Right cardiac atrium (tissue), 5 donors: ENCODE measurements at regions of chr13 and their contacts with region 1.

Region 1: DNA sequence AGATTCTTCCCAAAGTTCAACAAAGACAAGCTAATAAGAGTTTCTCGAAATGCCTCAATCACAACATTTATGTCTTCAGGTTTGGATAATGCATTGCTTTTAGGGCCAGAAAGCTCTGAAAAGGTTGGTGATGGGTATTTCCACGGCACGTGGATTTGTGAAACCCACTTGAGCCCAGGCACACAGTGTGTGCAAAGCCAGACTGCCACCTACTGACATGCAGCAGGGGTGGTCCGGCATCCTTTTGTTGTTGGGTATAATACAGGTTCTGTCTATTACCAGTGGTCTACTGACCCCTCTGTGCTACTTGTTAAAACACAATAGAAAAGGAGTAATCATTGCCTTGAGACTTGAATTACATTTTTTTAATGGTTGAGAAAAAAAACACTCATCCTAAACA is 225.6 kb downstream of the RAP2A start:
- DNase-seq: peak in 1 of 3 donors; percentile 65
- ATAC-seq: peak; percentile 59 to 60
- H3K4me3 ChIP-seq: no peak overlapping the region
- H3K27ac ChIP-seq: no peak overlapping the region
- H3K4me1 ChIP-seq: no peaks in the 10 kb centered on the region
- H3K27me3 ChIP-seq: no peaks in the 10 kb centered on the region

Region 2: GRCh38 chr13:97359181-97360057 is 300.2 kb before region 1 on chr13:
- intact Hi-C with region 1: loop called in 1 of 4 experiments (anchors 10 kb)
- DNase-seq: no peak
- ATAC-seq: peak; percentile 87 to 89
- H3K4me3 ChIP-seq: no peak overlapping the region
- H3K27ac ChIP-seq: no peak overlapping the region
- H3K4me1 ChIP-seq: peaks cover 9% of the 10 kb centered on the region
- H3K27me3 ChIP-seq: no peaks in the 10 kb centered on the region

Region 3: DNA sequence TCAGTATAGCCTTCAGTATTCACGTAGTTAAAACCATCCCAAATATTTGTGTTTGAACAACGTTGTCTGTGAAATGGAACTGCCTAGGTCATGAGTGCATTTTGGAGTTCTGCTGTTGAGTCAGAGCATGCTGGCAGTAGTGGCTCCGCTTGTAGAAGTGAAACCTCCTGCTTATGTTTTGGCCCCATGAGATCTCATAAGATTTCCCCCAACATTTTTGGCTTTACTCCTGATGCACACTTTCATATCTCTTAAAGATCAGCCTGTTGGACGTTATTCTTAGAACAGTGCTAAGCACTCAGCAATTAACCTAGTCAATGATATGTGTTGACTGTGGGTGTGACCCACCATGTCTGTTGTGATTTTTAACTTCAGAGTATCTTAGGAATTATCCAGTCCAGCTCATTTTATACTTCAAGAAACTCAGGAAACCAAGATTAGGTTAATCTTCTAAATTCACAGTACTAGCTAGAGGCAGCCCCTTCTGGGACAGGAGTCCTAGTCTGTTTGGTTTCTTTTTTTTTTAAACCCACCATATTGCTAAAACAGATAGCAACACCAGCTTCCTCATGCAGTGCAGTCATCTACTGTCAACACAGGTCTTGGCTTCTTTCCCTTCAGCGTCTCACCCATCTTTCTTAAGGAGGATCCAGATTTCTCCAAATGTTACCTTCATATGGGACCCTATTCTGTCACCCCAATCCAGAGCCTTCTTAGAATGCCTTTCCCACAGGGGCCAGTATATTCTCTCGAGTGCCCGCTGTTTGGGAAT is 199.4 kb before region 1 on chr13:
- intact Hi-C with region 1: no loop called
- DNase-seq: peak in 1 of 3 donors; percentile 40
- ATAC-seq: peak; percentile 59 to 67
- H3K4me3 ChIP-seq: no peak overlapping the region
- H3K27ac ChIP-seq: no peak overlapping the region
- H3K4me1 ChIP-seq: peaks cover 10% of the 10 kb centered on the region
- H3K27me3 ChIP-seq: no peaks in the 10 kb centered on the region

Region 4: DNA sequence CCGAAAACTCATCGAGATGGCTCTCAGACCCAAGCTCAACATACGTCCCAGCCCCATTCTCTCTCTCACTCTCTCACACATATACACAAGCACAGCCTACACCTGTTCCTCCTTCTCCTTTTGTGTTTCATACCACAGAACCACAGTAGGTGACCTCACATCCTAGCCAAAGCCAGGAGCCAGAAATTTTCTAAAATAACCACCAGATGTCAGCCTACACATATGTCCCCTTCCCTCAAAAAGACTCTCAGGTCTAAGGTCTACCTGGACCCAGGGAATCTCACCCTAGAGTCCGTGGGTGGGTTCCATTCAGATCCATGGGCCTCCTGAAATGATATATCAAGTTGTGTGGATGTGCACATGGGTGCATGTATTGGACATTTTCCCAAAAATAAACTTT is 189.7 kb after region 1 on chr13:
- intact Hi-C with region 1: no loop called
- DNase-seq: no peak
- ATAC-seq: peak in 1 of 2 donors; percentile 21
- H3K4me3 ChIP-seq: no peak overlapping the region
- H3K27ac ChIP-seq: no peak overlapping the region
- H3K4me1 ChIP-seq: no peaks in the 10 kb centered on the region
- H3K27me3 ChIP-seq: no peaks in the 10 kb centered on the region